Activated B cell treated with CpG ODN at 0.5 μM for 24 hours (primary cell): ENCODE measurements at regions of chr5 and their contacts with region 1.

Region 1: DNA sequence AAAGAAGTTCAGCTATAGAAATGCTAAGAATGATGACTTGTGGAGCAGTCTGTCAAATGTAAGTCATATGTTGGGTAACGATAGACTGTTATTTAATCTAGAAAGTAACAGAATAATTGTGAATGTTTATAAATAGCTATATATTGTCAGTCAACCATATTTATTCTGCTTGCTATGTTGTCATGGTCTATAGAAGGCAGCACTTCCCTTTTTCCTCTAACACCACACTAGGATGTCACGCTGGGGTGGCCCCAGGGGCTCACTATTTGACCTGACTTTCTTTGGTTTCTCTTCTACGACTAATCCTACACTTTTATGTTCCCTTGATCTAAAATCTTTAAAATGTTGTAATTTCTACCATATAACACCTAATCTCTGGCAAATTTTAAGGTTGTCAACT is 20.5 kb downstream of the ERAP2 start:
- DNase-seq: peak; percentile 39
- ATAC-seq: peak; percentile 94
- H3K4me3 Mint-ChIP-seq: peak overlapping the region; percentile 80
- H3K27ac Mint-ChIP-seq: peak overlapping the region; percentile 93
- H3K4me1 Mint-ChIP-seq: peaks cover 54% of the 10 kb centered on the region
- H3K27me3 Mint-ChIP-seq: no peaks in the 10 kb centered on the region
- CTCF ChIP-seq: no peak

Region 2: DNA sequence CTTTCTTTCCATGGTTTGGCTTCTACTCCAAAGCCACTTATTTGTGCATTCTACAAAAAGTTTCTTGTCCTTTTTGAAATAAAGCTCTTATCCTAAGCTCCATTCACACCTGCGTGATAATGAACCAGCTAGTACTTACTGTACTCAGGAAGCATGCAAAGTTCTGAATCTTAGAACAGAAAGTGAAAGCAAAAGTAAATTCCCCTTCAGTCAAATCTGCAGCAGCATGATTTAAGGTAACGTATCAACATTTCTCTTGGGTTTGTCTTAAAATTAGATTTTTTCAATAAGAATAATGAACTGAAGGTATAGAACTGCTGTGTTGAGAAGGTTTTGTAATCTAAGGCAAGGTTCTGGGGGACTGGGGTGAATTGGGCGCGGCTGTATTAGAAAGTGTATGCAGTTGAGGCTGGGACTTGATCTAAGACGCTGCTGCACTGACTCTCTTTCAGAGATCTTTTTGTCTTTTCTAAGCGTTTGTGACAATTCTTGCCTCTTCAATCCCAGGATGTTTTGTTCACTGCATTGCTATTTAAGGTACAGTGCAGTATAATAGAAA is 20.4 kb before region 1 on chr5 and contains the start of gene ERAP2:
- CTCF ChIA-PET with region 1: interaction called, 66 read pairs
- POLR2A ChIA-PET with region 1: interaction called, 62 read pairs
- intact Hi-C with region 1: loop called (anchors 1 kb)
- DNase-seq: no peak
- ATAC-seq: peak; percentile 53
- H3K4me3 Mint-ChIP-seq: peak within 1 kb of the TSS; percentile 98
- H3K27ac Mint-ChIP-seq: peak within 1 kb of the TSS; percentile 96
- H3K4me1 Mint-ChIP-seq: peaks cover 88% of the 10 kb centered on the region
- H3K27me3 Mint-ChIP-seq: no peaks in the 10 kb centered on the region
- CTCF ChIP-seq: no peak
- total RNA-seq, gene ERAP2: 63.1 and 80.9 TPM in 2 replicates

Region 3: DNA sequence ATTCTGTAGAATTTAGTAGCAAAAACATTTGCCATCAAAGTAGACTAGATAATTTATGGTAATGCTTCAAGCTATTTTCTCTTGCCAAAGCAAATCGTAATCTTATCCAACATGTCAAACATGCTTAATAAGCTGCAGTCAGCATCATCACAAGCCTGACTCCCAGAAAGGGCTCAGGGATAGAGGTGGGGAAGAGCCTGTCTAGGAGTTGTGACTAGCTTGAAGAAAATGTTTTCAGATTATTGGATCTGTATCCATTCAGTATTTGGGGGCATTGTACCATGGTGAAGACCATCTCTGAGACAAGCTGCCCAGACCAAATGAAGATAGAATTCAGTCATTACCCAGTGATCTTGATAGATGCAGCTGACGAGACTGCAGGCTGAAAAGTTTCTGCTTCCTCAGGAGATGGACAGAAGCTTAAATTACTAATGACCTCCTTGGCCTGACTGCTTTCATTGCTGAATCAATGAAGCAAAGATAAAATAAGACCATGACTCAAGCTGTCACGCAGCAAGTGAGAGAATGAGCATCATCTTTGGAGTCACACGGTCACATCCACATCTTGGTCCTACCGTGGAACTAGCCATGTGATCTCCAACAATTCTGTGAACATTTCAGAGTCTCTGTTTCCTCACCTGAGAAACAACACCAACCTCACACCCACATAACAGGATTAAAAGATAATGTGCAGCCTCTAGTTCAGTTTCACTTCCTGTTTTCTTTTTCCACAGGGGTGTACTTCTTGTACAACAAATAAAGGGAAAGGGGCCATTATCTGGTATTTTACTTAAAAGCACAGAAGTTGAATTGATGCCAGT is 11.1 kb before region 1 on chr5:
- CTCF ChIA-PET with region 1: interaction called, 3 read pairs
- POLR2A ChIA-PET with region 1: interaction called, 18 read pairs
- intact Hi-C with region 1: loop called (anchors 1 kb)
- DNase-seq: no peak
- ATAC-seq: peak; percentile 85
- H3K4me3 Mint-ChIP-seq: peak overlapping the region; percentile 67
- H3K27ac Mint-ChIP-seq: peak overlapping the region; percentile 91
- H3K4me1 Mint-ChIP-seq: peaks cover 58% of the 10 kb centered on the region
- H3K27me3 Mint-ChIP-seq: no peaks in the 10 kb centered on the region
- CTCF ChIP-seq: no peak

Region 4: DNA sequence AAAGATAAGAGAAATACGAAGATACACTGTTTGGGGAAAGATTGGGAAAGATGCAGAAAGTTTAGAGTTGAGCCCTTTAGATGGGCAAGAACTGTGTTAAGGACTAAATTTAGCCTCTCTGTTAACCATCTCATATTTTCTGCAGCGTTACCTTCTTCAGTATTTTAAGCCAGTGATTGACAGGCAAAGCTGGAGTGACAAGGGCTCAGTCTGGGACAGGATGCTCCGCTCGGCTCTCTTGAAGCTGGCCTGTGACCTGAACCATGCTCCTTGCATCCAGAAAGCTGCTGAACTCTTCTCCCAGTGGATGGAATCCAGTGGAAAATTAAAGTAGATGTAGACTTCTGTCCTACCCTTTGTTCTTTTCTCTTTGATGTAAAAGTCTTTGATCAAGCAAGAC is 12.6 kb after region 1 on chr5:
- CTCF ChIA-PET with region 1: no interaction called
- POLR2A ChIA-PET with region 1: interaction called, 12 read pairs
- intact Hi-C with region 1: no loop called
- DNase-seq: no peak
- ATAC-seq: no peak
- H3K4me3 Mint-ChIP-seq: no peak overlapping the region
- H3K27ac Mint-ChIP-seq: no peak overlapping the region
- H3K4me1 Mint-ChIP-seq: peaks cover 8% of the 10 kb centered on the region
- H3K27me3 Mint-ChIP-seq: no peaks in the 10 kb centered on the region
- CTCF ChIP-seq: no peak

Region 5: GRCh38 chr5:96919754-96920197 is 23.0 kb after region 1 on chr5:
- CTCF ChIA-PET with region 1: no interaction called
- POLR2A ChIA-PET with region 1: interaction called, 11 read pairs
- intact Hi-C with region 1: no loop called
- DNase-seq: no peak
- ATAC-seq: peak; percentile 65
- H3K4me3 Mint-ChIP-seq: no peak overlapping the region
- H3K27ac Mint-ChIP-seq: peak overlapping the region; percentile 12
- H3K4me1 Mint-ChIP-seq: peaks cover 42% of the 10 kb centered on the region
- H3K27me3 Mint-ChIP-seq: no peaks in the 10 kb centered on the region
- CTCF ChIP-seq: no peak

Region 6: GRCh38 chr5:96963267-96963666 is 66.5 kb after region 1 on chr5:
- CTCF ChIA-PET with region 1: no interaction called
- POLR2A ChIA-PET with region 1: interaction called, 9 read pairs
- intact Hi-C with region 1: loop called (anchors 1 kb)
- DNase-seq: no peak
- ATAC-seq: peak; percentile 59
- H3K4me3 Mint-ChIP-seq: no peak overlapping the region
- H3K27ac Mint-ChIP-seq: peak overlapping the region; percentile 90
- H3K4me1 Mint-ChIP-seq: peaks cover 84% of the 10 kb centered on the region
- H3K27me3 Mint-ChIP-seq: no peaks in the 10 kb centered on the region
- CTCF ChIP-seq: no peak

Region 7: DNA sequence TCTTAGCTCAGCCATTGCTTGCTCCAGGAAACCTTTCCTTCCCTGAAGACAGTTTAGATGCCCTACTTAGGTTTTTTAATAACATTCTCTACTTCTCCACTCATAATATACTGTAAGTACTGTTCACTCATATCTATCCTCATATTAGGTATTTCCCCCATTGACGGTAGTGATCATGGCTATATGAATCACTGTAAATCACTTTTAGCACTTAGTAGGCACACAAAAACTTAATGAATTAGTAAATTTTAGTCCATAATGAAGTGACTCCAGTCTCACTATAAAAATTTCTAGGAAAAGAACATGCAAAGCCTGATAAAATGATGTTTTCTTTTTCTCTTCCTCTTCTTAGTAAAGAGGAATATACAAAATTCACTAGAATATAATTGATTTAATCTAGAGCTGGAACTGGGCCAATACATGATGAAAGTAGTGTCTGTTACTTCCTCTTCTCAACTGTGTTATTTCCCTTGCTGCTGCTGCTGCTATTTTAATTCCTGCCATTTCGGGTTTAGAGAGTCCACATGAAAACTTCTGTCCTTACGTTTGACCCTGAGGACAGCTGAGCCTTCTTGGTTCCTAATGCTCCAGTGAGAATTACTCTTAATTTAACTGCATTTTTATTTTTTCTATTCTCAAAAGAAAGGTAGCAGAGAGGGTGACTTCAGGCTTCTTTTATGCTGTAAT is 112.5 kb after region 1 on chr5:
- CTCF ChIA-PET with region 1: no interaction called
- POLR2A ChIA-PET with region 1: interaction called, 3 read pairs
- intact Hi-C with region 1: loop called (anchors 1 kb)
- DNase-seq: no peak
- ATAC-seq: peak; percentile 83
- H3K4me3 Mint-ChIP-seq: peak overlapping the region; percentile 66
- H3K27ac Mint-ChIP-seq: peak overlapping the region; percentile 91
- H3K4me1 Mint-ChIP-seq: peaks cover 24% of the 10 kb centered on the region
- H3K27me3 Mint-ChIP-seq: no peaks in the 10 kb centered on the region
- CTCF ChIP-seq: no peak

Region 8: GRCh38 chr5:97400537-97400936 is 503.7 kb after region 1 on chr5:
- CTCF ChIA-PET with region 1: no interaction called
- POLR2A ChIA-PET with region 1: no interaction called
- intact Hi-C with region 1: no loop called
- DNase-seq: no peak
- ATAC-seq: no peak
- H3K4me3 Mint-ChIP-seq: no peak overlapping the region
- H3K27ac Mint-ChIP-seq: no peak overlapping the region
- H3K4me1 Mint-ChIP-seq: no peaks in the 10 kb centered on the region
- H3K27me3 Mint-ChIP-seq: peaks cover 2% of the 10 kb centered on the region
- CTCF ChIP-seq: no peak

Region 9: DNA sequence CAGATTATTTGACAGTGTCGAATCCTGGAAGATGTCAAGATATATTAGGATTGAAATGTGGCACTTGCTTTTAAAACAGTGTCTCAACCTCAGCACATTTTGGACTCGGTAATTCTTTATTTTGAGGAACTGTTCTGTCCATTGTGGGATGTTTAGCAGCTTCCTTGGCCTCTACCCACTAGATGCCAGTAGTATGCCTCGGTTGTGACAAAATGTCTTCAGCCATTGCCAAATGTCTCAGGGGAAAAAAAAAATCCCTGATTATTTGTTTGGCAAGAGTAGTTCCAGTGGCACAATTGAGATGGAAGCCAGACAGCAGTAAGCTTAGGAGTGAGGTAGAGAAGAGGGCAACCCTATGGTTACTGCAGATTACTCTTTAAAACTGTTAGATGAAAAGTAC is 980.8 kb after region 1 on chr5:
- CTCF ChIA-PET with region 1: no interaction called
- POLR2A ChIA-PET with region 1: no interaction called
- intact Hi-C with region 1: no loop called
- DNase-seq: no peak
- ATAC-seq: no peak
- H3K4me3 Mint-ChIP-seq: no peak overlapping the region
- H3K27ac Mint-ChIP-seq: no peak overlapping the region
- H3K4me1 Mint-ChIP-seq: no peaks in the 10 kb centered on the region
- H3K27me3 Mint-ChIP-seq: no peaks in the 10 kb centered on the region
- CTCF ChIP-seq: no peak